Sigmoid colon (tissue), 7 donors: ENCODE measurements at regions of chr5 and their contacts with region 1.

Region 1: GRCh38 chr5:147822686-147823491 is 8.6 kb downstream of the SPINK1 start:
- DNase-seq: peak; percentile 73
- H3K4me3 ChIP-seq: no peak overlapping the region
- H3K27ac ChIP-seq: no peak overlapping the region
- H3K4me1 ChIP-seq: peaks cover 0 to 10% (median 0%) of the 10 kb centered on the region in 4 donors
- H3K27me3 ChIP-seq: no peaks in the 10 kb centered on the region
- CTCF ChIP-seq: peak; percentile 93 to 99 (median 95)
- EP300 ChIP-seq: no peak
- POLR2A ChIP-seq: no peak

Region 2: GRCh38 chr5:147628058-147628895 is 194.6 kb before region 1 on chr5:
- intact Hi-C with region 1: loop called (anchors 1 kb)
- DNase-seq: no peak
- H3K4me3 ChIP-seq: no peak overlapping the region
- H3K27ac ChIP-seq: no peak overlapping the region
- H3K4me1 ChIP-seq: no peaks in the 10 kb centered on the region
- H3K27me3 ChIP-seq: no peaks in the 10 kb centered on the region
- CTCF ChIP-seq: peak; percentile 70 to 80 (median 78)
- EP300 ChIP-seq: no peak
- POLR2A ChIP-seq: no peak

Region 3: GRCh38 chr5:147763791-147764525 is 58.9 kb before region 1 on chr5:
- intact Hi-C with region 1: no loop called
- DNase-seq: no peak
- H3K4me3 ChIP-seq: no peak overlapping the region
- H3K27ac ChIP-seq: peak overlapping the region in 1 of 4 donors; percentile 12
- H3K4me1 ChIP-seq: no peaks in the 10 kb centered on the region
- H3K27me3 ChIP-seq: no peaks in the 10 kb centered on the region
- CTCF ChIP-seq: no peak
- EP300 ChIP-seq: no peak
- POLR2A ChIP-seq: no peak

Region 4: DNA sequence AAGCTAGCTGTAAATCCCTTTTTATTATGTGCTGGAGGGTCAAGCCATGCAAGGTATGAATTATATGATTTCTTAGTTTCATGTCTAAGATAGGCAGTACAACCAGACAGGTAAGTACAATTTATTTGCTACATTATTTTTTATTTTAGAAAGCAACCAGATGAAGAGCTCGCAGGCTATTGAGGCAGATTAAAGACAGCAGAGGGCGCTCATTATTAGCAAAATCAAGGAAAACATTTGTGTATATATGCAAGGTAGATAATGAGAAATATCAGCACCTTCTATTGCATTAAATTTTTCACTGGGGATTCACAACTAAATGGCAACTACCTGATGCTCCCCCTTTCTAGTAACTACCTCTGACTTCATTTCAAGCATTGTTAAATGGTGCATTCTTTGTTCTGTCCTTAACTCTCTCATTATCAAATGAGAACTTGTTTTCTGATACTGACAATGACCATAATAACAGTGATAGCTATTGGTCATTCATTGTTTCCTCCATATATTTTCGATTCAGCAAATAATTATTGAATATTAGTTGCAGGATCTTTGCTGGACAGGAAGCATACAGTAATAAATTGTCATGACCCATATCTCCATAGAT is 64.2 kb after region 1 on chr5:
- intact Hi-C with region 1: no loop called
- DNase-seq: no peak
- H3K4me3 ChIP-seq: no peak overlapping the region
- H3K27ac ChIP-seq: no peak overlapping the region
- H3K4me1 ChIP-seq: no peaks in the 10 kb centered on the region
- H3K27me3 ChIP-seq: no peaks in the 10 kb centered on the region
- CTCF ChIP-seq: peak in 3 of 4 experiments; percentile 22 to 46 (median 44)
- EP300 ChIP-seq: no peak
- POLR2A ChIP-seq: no peak